Ascending aorta (tissue), 2 donors: ENCODE measurements at regions of chr3 and their contacts with region 1.

Region 1: GRCh38 chr3:189148081-189148507 is 23.7 kb upstream of the TPRG1 start:
- DNase-seq: peak in 1 of 2 donors; percentile 76
- H3K4me3 ChIP-seq: no peak overlapping the region
- H3K27ac ChIP-seq: no peak overlapping the region
- H3K4me1 ChIP-seq: no peaks in the 10 kb centered on the region
- H3K27me3 ChIP-seq: no peaks in the 10 kb centered on the region
- CTCF ChIP-seq: peak; percentile 68 to 73 (median 69)

Region 2: GRCh38 chr3:188954590-188955208 is 193.4 kb before region 1 on chr3:
- intact Hi-C with region 1: loop called (anchors 5 kb)
- DNase-seq: peak; percentile 36 to 92
- H3K4me3 ChIP-seq: no peak overlapping the region
- H3K27ac ChIP-seq: peak overlapping the region in 1 of 2 donors; percentile 36
- H3K4me1 ChIP-seq: peaks cover 12 to 24% of the 10 kb centered on the region in 2 donors
- H3K27me3 ChIP-seq: no peaks in the 10 kb centered on the region
- CTCF ChIP-seq: peak; percentile 86 to 94 (median 92)

Region 3: GRCh38 chr3:189195302-189195701 is 47.2 kb after region 1 on chr3:
- intact Hi-C with region 1: no loop called
- DNase-seq: no peak
- H3K4me3 ChIP-seq: no peak overlapping the region
- H3K27ac ChIP-seq: no peak overlapping the region
- H3K4me1 ChIP-seq: no peaks in the 10 kb centered on the region
- H3K27me3 ChIP-seq: no peaks in the 10 kb centered on the region
- CTCF ChIP-seq: no peak